ENCODE measurements at regions of chr7 and their contacts with region 1.

Region 1: DNA sequence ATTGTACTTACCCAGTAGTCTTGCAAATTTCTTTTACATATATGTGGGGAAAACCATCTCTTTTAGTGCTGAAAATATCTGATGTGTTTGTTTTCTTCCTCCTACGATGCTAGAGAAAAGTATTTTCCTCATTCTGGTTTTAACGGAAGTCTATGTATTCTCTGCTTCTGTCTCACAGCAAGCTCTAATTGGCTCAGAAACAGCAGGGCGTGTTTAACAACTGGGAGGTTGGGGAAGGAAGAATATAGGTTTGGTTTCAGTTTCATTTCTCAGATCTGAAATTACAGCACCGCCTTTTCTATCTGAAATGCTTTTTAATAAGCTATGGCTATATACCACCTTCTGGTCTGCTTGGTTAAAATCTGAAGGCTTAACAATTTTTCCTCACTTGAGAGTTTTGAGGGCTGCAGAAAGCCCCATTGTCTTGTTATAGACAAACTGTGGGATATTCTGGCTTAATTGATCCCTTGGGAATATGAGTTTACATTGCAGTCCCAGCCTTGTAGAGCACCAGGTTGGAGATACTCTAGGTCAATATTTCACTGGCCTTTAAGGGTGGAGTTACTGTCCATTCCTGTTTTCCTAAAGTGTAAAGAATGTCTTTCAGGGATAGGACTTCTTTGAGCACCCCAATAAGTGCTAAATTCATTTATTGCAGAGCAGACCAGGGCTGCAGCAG is at the start of gene SAMD9:
- DNase-seq: peak; percentile 83
- ATAC-seq: peak; percentile 75
- H3K4me3 ChIP-seq: peak within 1 kb of the TSS; percentile 72
- H3K27ac ChIP-seq: peak within 1 kb of the TSS; percentile 92
- H3K4me1 ChIP-seq: peaks cover 34% of the 10 kb centered on the region
- H3K27me3 ChIP-seq: no peaks in the 10 kb centered on the region
- CTCF ChIP-seq: no peak
- total RNA-seq, gene SAMD9: 3.0 and 3.3 TPM in 2 replicates

Region 2: GRCh38 chr7:93147363-93147762 is 29.4 kb after region 1 on chr7:
- CTCF ChIA-PET with region 1: no interaction called
- POLR2A ChIA-PET with region 1: no interaction called
- intact Hi-C with region 1: loop called (anchors 2 kb)
- DNase-seq: peak; percentile 41
- ATAC-seq: peak; percentile 48
- H3K4me3 ChIP-seq: peak overlapping the region; percentile 74
- H3K27ac ChIP-seq: no peak overlapping the region
- H3K4me1 ChIP-seq: peaks cover 40% of the 10 kb centered on the region
- H3K27me3 ChIP-seq: no peaks in the 10 kb centered on the region
- CTCF ChIP-seq: no peak

Measured in PC-3 (cell line).